ENCODE measurements at regions of chr11 and their contacts with region 1.

Region 1: DNA sequence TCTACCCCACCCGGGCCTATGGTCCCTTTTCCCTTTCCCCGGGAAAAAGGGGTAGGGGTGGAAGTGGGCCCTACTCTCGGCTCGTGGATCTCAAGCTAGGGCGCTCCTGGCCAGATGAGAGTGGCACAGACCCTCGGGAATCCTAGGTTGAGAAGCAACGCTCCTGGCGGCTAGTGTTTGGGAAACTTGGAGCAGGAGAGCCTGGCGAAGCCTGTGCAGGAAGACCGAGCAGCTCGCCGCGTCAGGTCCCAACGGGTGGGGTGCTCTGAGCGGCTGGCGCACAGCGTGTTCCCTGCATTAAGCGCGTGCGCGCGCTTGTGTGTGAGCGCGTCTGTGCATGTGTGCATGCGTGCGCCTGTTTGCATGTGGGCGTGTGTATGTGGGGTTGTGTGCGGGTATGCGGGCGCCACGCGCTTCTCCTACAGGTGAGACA is 7.1 kb upstream of the FLI1 start:
- DNase-seq: peak in 2 of 3 donors; percentile 69 to 80
- H3K4me3 ChIP-seq: peak overlapping the region; percentile 11 to 84 (median 68)
- H3K27ac ChIP-seq: peak overlapping the region in 1 of 2 experiments; percentile 61
- H3K4me1 ChIP-seq: peaks cover 2 to 78% (median 50%) of the 10 kb centered on the region in 4 experiments
- H3K27me3 ChIP-seq: no peaks in the 10 kb centered on the region

Region 2: DNA sequence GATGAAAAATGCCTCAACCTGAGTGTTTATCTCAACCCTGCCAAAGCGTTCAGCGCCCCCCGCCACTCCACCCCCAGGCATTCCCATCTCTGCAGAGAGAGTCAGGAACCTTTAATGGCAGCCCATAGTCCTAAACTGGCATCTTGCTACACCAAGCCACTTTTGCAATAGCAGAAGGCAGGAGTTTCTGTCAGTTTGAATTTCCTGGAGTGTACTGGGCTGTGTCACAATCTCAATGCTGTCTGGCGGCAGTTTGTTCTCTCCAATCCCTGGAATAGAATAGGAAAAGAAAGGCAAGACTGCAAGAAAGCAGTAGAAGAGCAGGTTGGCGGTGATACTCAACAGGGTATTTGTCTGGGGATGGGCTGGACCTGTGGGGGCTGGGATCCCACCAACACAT is 25.8 kb before region 1 on chr11:
- CTCF ChIA-PET with region 1: interaction called, 19 read pairs
- POLR2A ChIA-PET with region 1: interaction called, 4 read pairs
- DNase-seq: no peak
- H3K4me3 ChIP-seq: no peak overlapping the region
- H3K27ac ChIP-seq: no peak overlapping the region
- H3K4me1 ChIP-seq: peaks cover 27 to 80% (median 46%) of the 10 kb centered on the region in 4 experiments
- H3K27me3 ChIP-seq: no peaks in the 10 kb centered on the region

Region 3: GRCh38 chr11:128669506-128670270 is 17.1 kb before region 1 on chr11:
- CTCF ChIA-PET with region 1: interaction called, 10 read pairs
- POLR2A ChIA-PET with region 1: interaction called, 3 read pairs
- DNase-seq: peak in 2 of 3 donors; percentile 70 to 81
- H3K4me3 ChIP-seq: no peak overlapping the region
- H3K27ac ChIP-seq: no peak overlapping the region
- H3K4me1 ChIP-seq: peaks cover 10 to 60% (median 38%) of the 10 kb centered on the region in 4 experiments
- H3K27me3 ChIP-seq: no peaks in the 10 kb centered on the region

Region 4: GRCh38 chr11:128796270-128796669 is 109.5 kb after region 1 on chr11:
- CTCF ChIA-PET with region 1: no interaction called
- POLR2A ChIA-PET with region 1: no interaction called
- DNase-seq: no peak
- H3K4me3 ChIP-seq: no peak overlapping the region
- H3K27ac ChIP-seq: no peak overlapping the region
- H3K4me1 ChIP-seq: no peaks in the 10 kb centered on the region
- H3K27me3 ChIP-seq: no peaks in the 10 kb centered on the region